PC-9 (cell line): ENCODE measurements at regions of chr12 and their contacts with region 1.

Region 1: DNA sequence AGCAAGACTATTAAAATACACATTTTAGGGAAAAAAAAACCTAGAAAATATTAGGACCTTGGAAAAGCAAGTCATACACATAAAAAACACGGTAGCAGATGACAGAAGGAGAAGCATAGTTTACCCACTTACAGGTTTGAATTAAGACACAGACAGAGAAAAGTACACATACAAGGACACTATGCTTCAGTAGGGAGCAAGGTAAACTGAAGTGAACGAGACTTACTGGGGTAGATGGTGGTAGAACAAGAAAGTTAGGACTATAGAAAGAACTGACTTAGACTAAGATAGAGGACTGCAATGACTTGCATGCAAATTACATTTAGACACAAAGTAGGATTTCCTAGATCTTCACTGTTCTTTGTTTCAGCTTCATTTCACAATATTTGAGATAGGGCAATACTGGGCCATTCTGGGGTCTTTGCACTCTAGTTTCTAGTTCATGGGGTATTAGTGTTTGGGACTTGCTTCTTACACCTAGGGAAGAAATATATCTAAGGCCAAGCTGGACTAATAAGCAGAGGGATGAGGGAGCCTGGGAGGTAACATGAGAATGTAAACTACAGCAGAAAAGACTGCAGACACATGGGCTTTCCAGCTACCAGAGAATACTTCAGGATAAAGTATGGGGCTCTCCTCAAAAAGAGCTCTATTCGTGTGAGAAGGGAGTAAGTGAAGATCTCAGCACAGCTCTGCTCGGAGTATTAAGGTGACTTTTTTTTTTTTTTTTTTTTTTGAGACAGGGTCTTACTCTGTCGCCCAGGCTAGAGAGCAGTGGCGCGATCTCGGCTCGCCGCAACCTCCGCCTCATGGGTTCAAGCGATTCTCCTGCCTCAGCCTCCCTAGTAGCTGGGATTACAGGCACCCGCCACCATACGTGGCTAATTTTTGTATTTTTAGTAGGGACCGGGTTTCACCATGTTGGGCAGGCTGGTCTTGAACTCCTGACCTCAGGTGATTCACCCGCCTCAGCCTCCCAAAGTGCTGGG is 27.8 kb upstream of the STAC3 start:
- DNase-seq: no peak
- H3K4me3 ChIP-seq: no peak overlapping the region
- H3K27ac ChIP-seq: no peak overlapping the region
- H3K4me1 ChIP-seq: peaks cover 18% of the 10 kb centered on the region
- H3K27me3 ChIP-seq: no peaks in the 10 kb centered on the region
- CTCF ChIP-seq: no peak

Region 2: DNA sequence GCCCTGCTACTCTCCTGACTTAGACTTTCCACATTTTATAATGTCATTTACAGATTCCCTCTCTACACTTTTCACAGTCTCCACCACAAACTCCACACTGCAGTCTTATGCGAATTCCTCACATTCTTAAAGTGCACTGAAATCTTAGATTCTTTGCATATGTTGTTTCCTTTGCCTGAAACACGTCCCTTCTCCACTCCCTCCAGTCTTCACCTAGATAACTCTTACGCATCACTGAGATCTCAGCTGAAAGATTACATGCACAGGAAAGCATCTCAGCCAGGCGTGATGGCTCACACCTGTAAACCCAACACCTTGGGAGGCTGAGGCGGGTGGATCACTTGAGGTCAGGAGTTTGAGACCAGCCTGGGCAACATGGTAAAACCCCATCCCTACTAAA is 204.7 kb after region 1 on chr12:
- CTCF ChIA-PET with region 1: interaction called, 19 read pairs
- POLR2A ChIA-PET with region 1: no interaction called
- intact Hi-C with region 1: no loop called
- DNase-seq: peak in 1 of 2 experiments; percentile 46
- H3K4me3 ChIP-seq: no peak overlapping the region
- H3K27ac ChIP-seq: no peak overlapping the region
- H3K4me1 ChIP-seq: no peaks in the 10 kb centered on the region
- H3K27me3 ChIP-seq: peaks cover 21% of the 10 kb centered on the region; the same call in 1 of the 2 replicates
- CTCF ChIP-seq: no peak